ENCODE measurements at regions of chr9 and their contacts with region 1.

Region 1: DNA sequence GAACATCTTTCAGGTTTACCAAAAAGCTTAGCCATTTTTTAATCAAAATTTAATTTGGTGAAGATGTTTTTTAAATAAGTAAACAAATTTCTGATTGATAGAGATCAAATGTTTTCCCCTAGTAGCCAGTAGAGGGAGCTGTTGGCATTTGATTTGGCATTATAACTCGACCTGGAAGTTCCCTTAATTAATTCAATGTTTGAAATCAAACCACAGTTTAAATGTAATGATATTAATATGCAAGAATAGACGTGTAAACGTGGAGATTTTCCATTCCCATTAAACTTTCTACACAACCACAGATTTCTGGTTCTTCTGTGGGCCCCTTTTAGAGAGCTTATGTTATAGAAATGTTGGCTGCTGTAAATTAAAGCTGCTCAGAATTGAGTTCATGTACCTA is 148.1 kb upstream of the MPDZ start:
- DNase-seq: peak; percentile 30
- H3K4me3 ChIP-seq: no peak overlapping the region; a peak in 2 of 4 replicates
- H3K27ac ChIP-seq: peak overlapping the region in 1 of 2 experiments; percentile 34; a peak in 2 of 4 replicates
- H3K4me1 ChIP-seq: no peaks in the 10 kb centered on the region; a peak in 2 of 4 replicates
- H3K27me3 ChIP-seq: no peaks in the 10 kb centered on the region
- CTCF ChIP-seq: peak; percentile 87
- EP300 ChIP-seq: no peak
- RAD21 ChIP-seq: peak; percentile 88

Region 2: DNA sequence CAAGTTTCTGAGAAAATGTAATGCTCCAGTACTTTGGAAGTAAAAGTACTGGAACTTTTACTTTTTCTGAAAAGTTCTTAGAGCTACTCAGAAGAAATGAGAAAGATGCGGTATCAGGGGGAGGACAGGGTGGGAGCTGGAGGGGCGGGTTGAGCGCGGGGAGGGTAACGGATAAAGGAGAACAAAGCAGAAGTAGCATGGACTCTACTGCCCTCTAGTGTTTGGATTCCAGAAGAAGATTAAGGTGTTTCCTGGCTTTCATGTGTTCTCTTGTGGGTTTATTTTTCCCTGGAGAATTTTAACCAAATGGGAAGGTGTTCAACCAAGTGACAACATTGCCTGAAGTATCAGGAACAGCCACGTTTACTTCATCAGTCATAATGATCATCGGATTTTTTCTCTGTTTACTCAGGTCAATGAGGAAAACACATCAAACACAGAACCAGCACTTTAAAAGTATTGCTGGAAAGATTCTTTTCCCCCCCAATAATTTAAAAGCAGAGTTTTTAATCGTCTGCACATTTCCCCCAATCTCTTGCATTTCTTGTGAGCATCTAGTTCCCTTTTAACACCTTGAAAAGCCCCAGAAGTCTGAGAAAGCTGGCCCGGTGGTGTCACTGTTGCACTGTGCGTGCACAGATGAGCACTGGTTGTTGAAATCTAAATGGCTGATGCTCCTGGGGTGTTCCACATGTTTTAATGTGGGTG is 338.7 kb before region 1 on chr9:
- CTCF ChIA-PET with region 1: interaction called, 12 read pairs
- POLR2A ChIA-PET with region 1: no interaction called
- DNase-seq: peak; percentile 79
- H3K4me3 ChIP-seq: peak overlapping the region in 1 of 2 experiments; percentile 49; a peak in 2 of 4 replicates
- H3K27ac ChIP-seq: no peak overlapping the region
- H3K4me1 ChIP-seq: peaks cover 0 to 2% of the 10 kb centered on the region in 2 experiments; a peak in 2 of 4 replicates
- H3K27me3 ChIP-seq: no peaks in the 10 kb centered on the region
- CTCF ChIP-seq: peak; percentile 74
- EP300 ChIP-seq: no peak
- RAD21 ChIP-seq: peak; percentile 78

Region 3: DNA sequence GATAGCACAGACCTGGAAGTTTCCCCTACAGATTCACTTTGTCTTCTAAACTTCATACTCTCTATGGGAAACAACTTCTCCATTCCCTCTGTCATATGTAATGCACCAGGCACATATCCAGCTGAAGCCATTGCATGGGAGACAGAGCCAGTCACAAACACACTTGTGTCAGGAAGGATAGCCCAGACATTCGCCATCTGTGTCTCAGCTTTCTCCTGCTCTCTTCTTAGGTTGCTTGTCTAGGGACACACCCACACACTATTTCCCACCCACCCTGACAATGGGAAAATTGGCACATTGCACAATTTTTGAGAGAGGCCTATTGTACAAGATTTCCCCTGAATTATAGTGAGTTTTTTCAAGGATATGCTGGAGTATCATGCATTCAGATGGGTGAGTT is 10.3 kb after region 1 on chr9:
- CTCF ChIA-PET with region 1: interaction called, 12 read pairs
- POLR2A ChIA-PET with region 1: no interaction called
- DNase-seq: no peak
- H3K4me3 ChIP-seq: no peak overlapping the region
- H3K27ac ChIP-seq: no peak overlapping the region
- H3K4me1 ChIP-seq: no peaks in the 10 kb centered on the region
- H3K27me3 ChIP-seq: no peaks in the 10 kb centered on the region
- CTCF ChIP-seq: no peak
- EP300 ChIP-seq: no peak
- RAD21 ChIP-seq: no peak

Region 4: GRCh38 chr9:13557746-13558145 is 130.2 kb after region 1 on chr9:
- CTCF ChIA-PET with region 1: no interaction called
- POLR2A ChIA-PET with region 1: no interaction called
- DNase-seq: no peak
- H3K4me3 ChIP-seq: no peak overlapping the region
- H3K27ac ChIP-seq: no peak overlapping the region
- H3K4me1 ChIP-seq: no peaks in the 10 kb centered on the region; a peak in 1 of 4 replicates
- H3K27me3 ChIP-seq: no peaks in the 10 kb centered on the region
- CTCF ChIP-seq: no peak
- EP300 ChIP-seq: no peak
- RAD21 ChIP-seq: no peak

Region 5: DNA sequence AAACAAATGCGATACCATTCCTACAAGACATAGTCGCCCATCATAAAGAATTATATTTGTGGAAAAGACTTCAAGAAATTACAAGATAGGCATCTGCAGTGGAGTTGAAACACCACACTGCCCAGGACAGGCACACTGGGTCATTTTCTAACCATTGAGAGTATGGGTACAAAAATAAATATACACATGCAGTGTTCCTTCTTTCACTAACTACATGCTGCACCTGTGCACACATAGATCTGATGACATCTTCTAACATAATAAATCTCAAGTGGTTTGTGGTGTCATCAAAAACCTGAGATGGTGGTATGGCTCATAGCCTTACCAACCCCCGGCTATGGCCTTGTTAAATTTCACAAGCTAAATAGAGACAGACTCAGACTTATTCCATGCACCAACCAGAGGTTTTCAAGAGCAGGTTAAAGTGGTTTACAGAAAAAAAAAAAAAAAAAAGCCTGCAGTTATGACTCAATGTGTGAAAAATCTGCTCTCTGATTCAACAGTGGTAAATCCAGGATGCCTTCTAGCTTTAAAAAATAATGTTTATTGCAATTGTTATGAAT is 898.8 kb after region 1 on chr9:
- CTCF ChIA-PET with region 1: interaction called, 10 read pairs
- POLR2A ChIA-PET with region 1: no interaction called
- DNase-seq: no peak
- H3K4me3 ChIP-seq: no peak overlapping the region
- H3K27ac ChIP-seq: peak overlapping the region in 1 of 2 experiments; percentile 51; a peak in 2 of 4 replicates
- H3K4me1 ChIP-seq: peaks cover 4 to 20% of the 10 kb centered on the region in 2 experiments; a peak in 2 of 4 replicates
- H3K27me3 ChIP-seq: no peaks in the 10 kb centered on the region
- CTCF ChIP-seq: no peak
- EP300 ChIP-seq: no peak; a peak in 1 of 4 replicates
- RAD21 ChIP-seq: no peak

Region 6: DNA sequence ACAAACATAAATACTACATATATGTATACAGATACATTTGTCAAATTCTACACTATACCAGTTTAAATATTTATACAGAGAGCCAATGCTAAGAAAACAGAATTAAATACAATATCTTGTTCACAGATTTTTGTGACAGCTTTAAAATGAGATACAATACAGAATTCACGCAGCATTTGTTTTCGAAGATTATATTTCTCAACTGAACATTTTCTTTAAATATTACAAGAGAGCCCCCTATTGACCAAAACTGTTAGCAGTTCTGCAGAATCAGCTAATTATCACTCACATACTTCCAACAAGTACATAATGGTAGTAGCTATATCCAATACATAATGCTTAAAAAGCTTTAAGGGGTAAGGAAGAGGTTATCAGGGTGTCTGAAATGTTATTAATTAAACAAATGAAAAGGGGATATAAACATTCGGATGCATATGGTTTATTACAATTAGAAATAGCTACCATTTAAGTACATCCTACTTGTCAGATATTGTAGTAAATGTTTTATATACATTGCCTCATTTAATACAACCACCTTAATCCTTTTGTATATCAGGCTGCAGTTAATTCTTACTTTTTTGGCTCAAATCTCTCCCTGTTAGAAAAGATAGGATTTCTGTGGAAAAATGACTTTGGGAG is 1234.0 kb after region 1 on chr9:
- CTCF ChIA-PET with region 1: interaction called, 13 read pairs
- POLR2A ChIA-PET with region 1: no interaction called
- DNase-seq: peak; percentile 58
- H3K4me3 ChIP-seq: no peak overlapping the region
- H3K27ac ChIP-seq: no peak overlapping the region
- H3K4me1 ChIP-seq: no peaks in the 10 kb centered on the region; a peak in 1 of 4 replicates
- H3K27me3 ChIP-seq: no peaks in the 10 kb centered on the region
- CTCF ChIP-seq: peak; percentile 71
- EP300 ChIP-seq: no peak
- RAD21 ChIP-seq: peak; percentile 78